Dorsolateral prefrontal cortex (tissue), 120 donors: ENCODE measurements at regions of chr7 and their contacts with region 1.

Region 1: DNA sequence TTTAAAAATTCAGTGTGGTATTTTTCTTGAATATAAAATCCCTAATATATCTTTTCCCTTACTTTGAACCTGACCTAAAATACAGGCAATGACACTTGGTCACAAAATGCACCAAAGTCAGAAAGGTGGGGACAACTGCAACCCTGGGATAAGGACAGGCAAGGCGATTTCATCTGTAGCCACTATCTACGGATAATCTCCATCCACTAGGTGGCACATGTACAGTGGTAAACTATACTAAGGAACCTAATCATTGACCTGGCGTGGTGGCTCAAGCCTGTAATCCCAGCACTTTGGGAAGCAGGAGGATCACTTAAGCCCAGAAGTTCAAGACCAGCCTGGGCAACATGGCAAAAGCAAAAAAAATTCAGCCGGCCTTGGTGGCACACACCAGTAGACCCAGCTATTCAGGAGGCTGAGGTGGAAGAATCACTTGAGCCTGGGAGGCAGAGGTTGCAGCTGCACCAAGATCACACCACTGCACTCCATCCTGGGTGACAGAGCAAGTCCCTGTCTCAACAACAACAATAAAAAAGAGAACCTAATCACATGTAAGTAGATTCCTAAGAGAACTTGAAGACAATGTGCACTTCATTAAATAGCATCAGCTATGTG is 98.9 kb downstream of the KMT2C start:
- DNase-seq: peak in 1 of 10 donors; percentile 10
- H3K4me3 ChIP-seq: peak overlapping the region in 10 of 59 donors; percentile 9 to 51 (median 38)
- H3K27ac ChIP-seq: peak overlapping the region in 36 of 59 donors; percentile 4 to 77 (median 58)
- H3K27me3 ChIP-seq: no peaks in the 10 kb centered on the region
- CTCF ChIP-seq: peak in 55 of 56 donors; percentile 9 to 71 (median 52)

Region 2: GRCh38 chr7:152402384-152403250 is 65.8 kb after region 1 on chr7:
- intact Hi-C with region 1: no loop called
- DNase-seq: no peak
- H3K4me3 ChIP-seq: no peak overlapping the region
- H3K27ac ChIP-seq: no peak overlapping the region
- H3K27me3 ChIP-seq: peaks cover 0 to 7% (median 0%) of the 10 kb centered on the region in 45 donors
- CTCF ChIP-seq: no peak

Region 3: GRCh38 chr7:152436111-152436930 is 99.5 kb after region 1 on chr7:
- intact Hi-C with region 1: loop called in 1 of 2 experiments (anchors 5 kb)
- DNase-seq: peak; percentile 81 to 95 (median 92)
- H3K4me3 ChIP-seq: peak overlapping the region; percentile 50 to 87 (median 67)
- H3K27ac ChIP-seq: peak overlapping the region; percentile 49 to 99 (median 95)
- H3K27me3 ChIP-seq: no peaks in the 10 kb centered on the region
- CTCF ChIP-seq: peak in 4 of 56 donors; percentile 10 to 23 (median 20)

Region 4: GRCh38 chr7:152463709-152464311 is 126.9 kb after region 1 on chr7:
- intact Hi-C with region 1: loop called in 1 of 2 experiments (anchors 5 kb)
- DNase-seq: peak; percentile 100
- H3K4me3 ChIP-seq: peak overlapping the region; percentile 70 to 98 (median 89)
- H3K27ac ChIP-seq: peak overlapping the region; percentile 90 to 100 (median 99)
- H3K27me3 ChIP-seq: no peaks in the 10 kb centered on the region
- CTCF ChIP-seq: peak in 10 of 56 donors; percentile 3 to 27 (median 11)

Region 5: DNA sequence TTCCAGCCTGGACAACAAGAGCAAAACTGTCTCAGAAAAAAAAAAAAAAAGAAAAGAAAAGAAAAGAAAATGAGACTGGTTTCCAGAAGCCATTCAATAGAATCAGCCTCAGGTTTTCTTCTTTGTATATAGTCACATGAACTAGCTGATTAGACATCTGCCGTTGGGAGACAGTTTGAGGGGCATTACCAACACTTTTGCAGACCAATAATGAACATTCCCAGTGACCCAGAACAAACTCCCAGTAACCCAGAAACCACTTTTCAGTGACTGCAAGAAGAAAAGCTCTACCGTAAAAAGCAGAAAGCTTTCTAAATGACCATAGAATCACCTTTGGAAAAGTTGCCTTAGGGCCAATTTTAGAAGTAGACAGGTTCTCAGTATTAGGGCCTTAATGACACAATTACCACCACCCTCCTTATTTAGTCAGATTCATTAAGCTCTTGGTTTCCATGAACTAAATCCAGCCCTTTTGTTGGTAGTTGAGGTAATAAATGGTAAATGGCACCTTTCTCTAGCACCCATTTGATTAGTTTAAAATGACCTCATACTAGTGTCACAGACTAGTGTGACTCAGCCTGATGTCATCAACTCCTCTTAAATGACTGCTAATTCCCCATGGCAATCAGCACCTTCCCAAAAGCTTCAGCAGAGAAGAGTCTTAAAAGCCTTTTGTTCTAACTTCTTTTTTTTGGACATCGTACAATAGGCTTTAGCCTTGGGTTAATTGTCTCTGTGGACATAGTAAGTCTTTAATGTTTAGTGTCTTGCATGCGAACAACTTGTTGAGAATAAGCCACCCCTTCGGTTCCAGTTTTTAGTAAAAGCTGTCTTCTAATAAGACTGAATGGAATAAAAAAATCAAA is 372.7 kb after region 1 on chr7:
- intact Hi-C with region 1: loop called in 1 of 2 experiments (anchors 5 kb)
- DNase-seq: no peak
- H3K4me3 ChIP-seq: no peak overlapping the region
- H3K27ac ChIP-seq: no peak overlapping the region
- H3K27me3 ChIP-seq: no peaks in the 10 kb centered on the region
- CTCF ChIP-seq: no peak